GM18951 (cell line): ENCODE measurements at regions of chr10 and their contacts with region 1.

Region 1: DNA sequence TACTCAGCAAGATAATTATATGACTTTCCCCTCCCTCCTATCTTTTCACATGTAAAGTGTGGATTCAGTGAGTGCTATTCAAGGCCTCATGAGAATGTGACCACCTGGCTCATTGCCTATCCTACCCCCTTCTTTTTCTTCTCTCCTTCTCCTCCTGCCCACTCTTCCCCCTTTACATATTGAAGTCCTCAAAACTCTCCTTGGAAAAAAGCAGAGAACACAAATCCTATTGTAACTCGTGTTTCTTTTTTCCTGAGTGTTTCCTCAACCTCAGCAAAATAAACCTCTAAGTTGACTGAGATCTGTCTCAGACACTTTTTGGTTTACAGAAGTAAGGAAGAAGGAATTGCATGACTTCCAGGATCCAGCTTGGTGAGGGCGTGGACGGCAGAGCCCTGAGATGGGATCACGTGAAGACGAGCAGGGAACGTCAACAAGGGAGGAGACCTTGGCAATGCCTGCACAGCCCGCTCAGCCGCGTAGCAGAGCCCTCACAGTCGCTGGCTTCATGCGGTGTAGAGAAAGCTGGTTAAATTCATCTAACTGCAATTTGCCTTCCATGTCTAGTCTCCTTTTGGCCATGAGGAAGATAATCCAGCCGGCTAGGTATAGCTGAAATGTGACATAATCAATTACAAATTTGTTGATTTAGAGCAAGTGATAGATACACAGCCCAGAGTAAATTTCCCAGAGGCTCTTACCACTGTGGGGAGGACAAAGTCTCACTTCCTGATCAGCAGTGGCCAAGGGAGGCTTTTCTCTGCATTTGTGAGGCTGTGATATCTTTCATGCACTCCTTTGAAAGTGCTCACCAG is 75.7 kb downstream of the LYZL2 start:
- POLR2A ChIP-seq: no peak

Region 2: GRCh38 chr10:30002104-30002950 is 551.5 kb before region 1 on chr10:
- in situ Hi-C with region 1: loop called (anchors 25 kb)
- POLR2A ChIP-seq: no peak

Region 3: DNA sequence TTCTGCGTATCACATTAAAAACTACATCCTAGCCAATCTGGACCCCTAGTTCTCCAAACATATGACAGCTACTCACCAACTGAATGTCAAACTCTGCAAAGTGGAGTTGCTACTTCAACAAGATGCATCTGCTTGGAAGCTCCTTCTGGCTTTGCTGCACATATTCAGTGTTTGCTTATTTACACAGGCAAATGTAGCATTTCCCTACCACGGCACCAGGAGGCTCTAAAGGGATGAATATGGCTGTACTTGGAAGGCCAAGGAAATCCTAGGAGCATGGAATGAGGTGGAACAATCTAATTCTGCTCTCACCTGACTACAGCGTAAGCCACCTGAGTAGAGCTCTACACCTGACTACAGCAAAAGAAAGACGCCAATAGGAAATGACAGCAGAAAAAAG is 244.4 kb before region 1 on chr10:
- in situ Hi-C with region 1: no loop called
- POLR2A ChIP-seq: no peak